ENCODE measurements at regions of chr17 and their contacts with region 1.

Region 1: GRCh38 chr17:78865682-78866390 is 25.2 kb upstream of the USP36 start:
- DNase-seq: peak; percentile 89
- H3K4me3 ChIP-seq: peak overlapping the region in 1 of 2 experiments; percentile 26; a peak in 1 of 4 replicates
- H3K27ac ChIP-seq: peak overlapping the region; percentile 21 to 53; a peak in 2 of 4 replicates
- H3K4me1 ChIP-seq: peaks cover 3 to 19% of the 10 kb centered on the region in 2 experiments; a peak in 3 of 4 replicates
- H3K27me3 ChIP-seq: no peaks in the 10 kb centered on the region
- CTCF ChIP-seq: peak; percentile 99
- EP300 ChIP-seq: peak in 1 of 2 experiments; percentile 28; a peak in 2 of 4 replicates
- RAD21 ChIP-seq: peak; percentile 99

Region 2: GRCh38 chr17:78798695-78799559 is 66.9 kb before region 1 on chr17:
- CTCF ChIA-PET with region 1: no interaction called
- POLR2A ChIA-PET with region 1: no interaction called
- DNase-seq: peak; percentile 70
- H3K4me3 ChIP-seq: no peak overlapping the region
- H3K27ac ChIP-seq: no peak overlapping the region
- H3K4me1 ChIP-seq: no peaks in the 10 kb centered on the region
- H3K27me3 ChIP-seq: no peaks in the 10 kb centered on the region
- CTCF ChIP-seq: peak; percentile 55
- EP300 ChIP-seq: no peak
- RAD21 ChIP-seq: peak; percentile 51

Region 3: DNA sequence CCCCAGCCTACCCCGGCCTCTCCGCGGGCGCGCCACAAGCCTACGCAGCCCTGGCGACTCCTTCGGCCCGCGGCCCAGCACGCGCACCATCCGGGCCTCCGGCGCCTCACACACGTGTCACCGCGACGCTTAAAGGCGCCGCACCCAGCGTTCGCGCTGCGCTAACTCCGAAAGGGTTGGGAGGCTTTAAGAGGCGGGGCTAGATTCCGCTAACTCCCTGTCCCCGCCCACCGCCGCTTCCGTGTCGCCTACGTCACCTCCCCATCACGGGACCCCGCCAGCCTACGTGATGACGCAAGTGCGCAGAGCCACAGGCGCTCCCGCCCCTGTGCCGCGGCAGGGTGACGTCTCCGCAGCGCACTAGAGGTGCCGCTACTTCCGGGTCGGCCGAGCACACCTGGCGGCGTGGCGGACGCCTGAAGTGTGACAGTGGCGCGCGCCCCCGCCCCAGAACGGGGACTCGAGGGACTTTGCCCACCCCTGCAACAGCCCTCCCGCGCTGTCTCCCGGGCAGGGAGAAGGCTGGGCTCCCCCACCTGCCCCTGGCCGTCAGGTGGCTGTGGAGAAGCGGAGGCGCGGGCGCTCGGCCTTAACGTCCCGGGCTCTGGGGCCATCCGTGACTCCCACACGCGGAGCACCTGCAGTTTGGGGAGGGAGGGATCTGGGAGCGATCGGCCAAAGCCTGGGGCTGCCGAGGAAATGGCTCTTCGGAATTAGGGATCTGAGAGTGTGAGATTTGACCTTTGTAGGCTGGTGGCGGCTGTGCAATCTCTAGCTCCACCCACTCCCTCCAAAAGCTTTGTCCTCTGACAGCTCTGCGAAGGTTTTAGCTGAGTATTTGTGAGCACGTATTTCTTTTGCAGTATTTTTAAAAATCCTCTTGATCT is 24.9 kb before region 1 on chr17 and contains the start of gene USP36:
- CTCF ChIA-PET with region 1: interaction called, 12 read pairs
- POLR2A ChIA-PET with region 1: interaction called, 3 read pairs
- DNase-seq: peak; percentile 100
- H3K4me3 ChIP-seq: peak within 1 kb of the TSS; percentile 75 to 84
- H3K27ac ChIP-seq: peak within 1 kb of the TSS; percentile 79 to 90
- H3K4me1 ChIP-seq: peaks cover 14 to 27% of the 10 kb centered on the region in 2 experiments; a peak in 3 of 4 replicates
- H3K27me3 ChIP-seq: no peaks in the 10 kb centered on the region
- CTCF ChIP-seq: no peak
- EP300 ChIP-seq: no peak; a peak in 1 of 4 replicates
- RAD21 ChIP-seq: no peak
- polyA plus RNA-seq, gene USP36: 34.6 and 41.2 TPM in 2 replicates

Region 4: DNA sequence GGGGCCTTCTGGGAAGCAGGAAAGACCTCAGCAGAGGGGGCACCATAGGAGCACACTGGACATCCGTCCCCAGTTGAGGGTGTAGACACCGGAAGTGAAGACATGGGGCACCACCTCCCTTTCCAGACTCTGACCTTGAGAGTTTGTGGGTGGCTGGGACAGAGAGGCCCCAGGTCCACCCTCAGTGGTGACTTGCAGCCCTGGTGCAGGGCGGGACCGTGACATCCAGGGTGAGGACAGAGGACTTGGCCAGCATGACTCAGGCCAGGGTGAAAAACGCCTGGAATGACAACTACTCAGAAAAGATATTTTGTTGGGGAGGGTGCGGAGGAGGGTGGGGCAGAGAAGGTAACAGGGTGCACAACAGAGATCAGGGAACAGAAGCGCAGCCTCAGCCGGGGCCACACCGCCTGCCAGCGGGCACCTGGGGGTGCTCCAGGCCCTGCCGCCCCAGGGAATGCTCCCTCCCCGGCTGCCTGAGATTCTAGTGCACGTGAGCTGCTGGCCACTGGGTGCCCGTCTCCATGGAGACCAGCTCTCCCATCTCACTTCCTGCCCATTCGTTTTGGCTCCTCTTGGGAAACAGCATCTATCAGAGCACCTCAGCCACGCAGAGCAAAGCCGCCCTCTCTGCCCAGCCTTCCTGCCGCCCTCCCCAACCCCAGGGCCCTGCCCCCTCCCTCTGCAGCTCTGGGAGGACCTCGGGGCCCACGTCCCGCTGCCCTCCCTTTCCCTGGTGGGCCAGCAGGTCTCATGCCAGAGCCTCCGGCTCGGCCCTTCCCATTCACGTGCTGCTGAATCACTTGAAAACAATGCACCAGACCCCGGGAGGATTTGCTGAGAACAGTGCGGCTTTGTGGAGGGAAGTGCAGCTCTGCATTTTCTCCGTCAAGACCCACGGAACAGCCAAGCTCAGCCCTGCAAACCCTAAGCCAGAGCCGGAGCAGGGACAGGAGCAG is 17.6 kb after region 1 on chr17:
- CTCF ChIA-PET with region 1: interaction called, 54 read pairs
- POLR2A ChIA-PET with region 1: no interaction called
- DNase-seq: peak; percentile 93
- H3K4me3 ChIP-seq: peak overlapping the region; percentile 34 to 58
- H3K27ac ChIP-seq: peak overlapping the region; percentile 99 to 100
- H3K4me1 ChIP-seq: peaks cover 32 to 74% of the 10 kb centered on the region in 2 experiments
- H3K27me3 ChIP-seq: no peaks in the 10 kb centered on the region
- CTCF ChIP-seq: 0 out of 2 replicates have a peak, but pooled peaks have one; percentile 11
- EP300 ChIP-seq: peak in 1 of 2 experiments; percentile 88; a peak in 3 of 4 replicates
- RAD21 ChIP-seq: no peak; the same call in none of the 2 replicates

Region 5: GRCh38 chr17:78903101-78903779 is 37.4 kb after region 1 on chr17 and contains the start of gene CEP295NL:
- CTCF ChIA-PET with region 1: interaction called, 18 read pairs
- POLR2A ChIA-PET with region 1: no interaction called
- DNase-seq: peak; percentile 78
- H3K4me3 ChIP-seq: no peak within 1 kb of the TSS
- H3K27ac ChIP-seq: no peak within 1 kb of the TSS; a peak in 1 of 4 replicates
- H3K4me1 ChIP-seq: peaks cover 0 to 21% of the 10 kb centered on the region in 2 experiments; a peak in 1 of 4 replicates
- H3K27me3 ChIP-seq: no peaks in the 10 kb centered on the region
- CTCF ChIP-seq: no peak
- EP300 ChIP-seq: no peak
- RAD21 ChIP-seq: no peak
- polyA plus RNA-seq, gene CEP295NL: 0.31 and 0.35 TPM in 2 replicates

Region 6: GRCh38 chr17:78925234-78925633 is 59.4 kb after region 1 on chr17 and contains the start of gene TIMP2:
- CTCF ChIA-PET with region 1: interaction called, 13 read pairs
- POLR2A ChIA-PET with region 1: interaction called, 3 read pairs
- DNase-seq: peak; percentile 100
- H3K4me3 ChIP-seq: peak within 1 kb of the TSS; percentile 74 to 84
- H3K27ac ChIP-seq: peak within 1 kb of the TSS; percentile 74 to 93
- H3K4me1 ChIP-seq: peaks cover 18 to 46% of the 10 kb centered on the region in 2 experiments
- H3K27me3 ChIP-seq: no peaks in the 10 kb centered on the region
- CTCF ChIP-seq: no peak
- EP300 ChIP-seq: no peak
- RAD21 ChIP-seq: peak; percentile 14; the same call in 1 of the 2 replicates
- polyA plus RNA-seq, gene TIMP2: 256 and 441 TPM in 2 replicates

Region 7: DNA sequence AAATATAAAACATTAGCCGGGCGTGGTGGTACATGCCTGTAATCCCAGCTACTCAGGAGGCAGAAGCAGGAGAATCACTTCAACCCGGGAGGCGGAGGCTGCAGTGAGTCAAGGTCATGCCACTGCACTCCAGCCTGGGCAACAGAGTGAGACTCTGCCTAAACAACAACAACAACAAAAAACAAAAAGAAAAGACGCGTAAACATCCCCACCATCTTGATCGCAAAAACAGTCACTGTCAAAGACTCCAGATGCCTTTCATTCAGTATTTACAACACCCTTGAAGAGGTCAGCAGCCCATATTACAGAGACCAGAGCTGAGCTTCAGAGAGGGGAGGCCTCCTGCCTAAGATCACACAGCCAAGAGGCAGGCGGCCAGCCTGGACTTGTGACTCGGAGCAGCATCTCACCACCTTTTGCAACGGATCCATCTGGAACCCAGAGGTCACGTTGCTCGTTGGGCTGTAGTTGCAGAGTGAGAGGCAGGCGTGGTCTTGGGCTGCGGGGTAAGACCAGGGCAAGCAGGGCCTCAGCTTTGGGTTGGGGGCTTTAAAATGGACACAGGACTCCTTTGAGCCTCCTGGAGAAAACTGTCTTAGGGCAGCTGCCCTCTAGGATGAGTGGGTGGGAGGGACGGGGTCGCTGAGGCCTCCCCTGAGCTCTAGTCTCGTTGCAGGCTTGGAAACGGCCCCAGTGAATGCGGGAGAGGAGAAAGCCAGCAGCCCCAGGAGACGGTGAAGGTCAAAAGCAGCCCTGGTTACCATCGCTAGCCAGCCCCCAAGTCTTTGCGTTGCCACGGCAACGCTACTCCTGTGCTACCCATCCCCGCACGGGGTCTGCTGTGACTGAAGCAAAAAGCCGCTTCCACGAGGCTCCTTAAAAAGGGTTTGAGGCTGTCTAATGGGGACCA is 87.8 kb after region 1 on chr17:
- CTCF ChIA-PET with region 1: interaction called, 458 read pairs
- POLR2A ChIA-PET with region 1: no interaction called
- DNase-seq: peak; percentile 84
- H3K4me3 ChIP-seq: no peak overlapping the region
- H3K27ac ChIP-seq: no peak overlapping the region; a peak in 1 of 4 replicates
- H3K4me1 ChIP-seq: peaks cover 8 to 13% of the 10 kb centered on the region in 2 experiments; a peak in 2 of 4 replicates
- H3K27me3 ChIP-seq: no peaks in the 10 kb centered on the region
- CTCF ChIP-seq: no peak
- EP300 ChIP-seq: no peak
- RAD21 ChIP-seq: no peak

Measured in SK-N-SH (cell line).